ENCODE measurements at regions of chr14 and their contacts with region 1.

Region 1: GRCh38 chr14:95157327-95158189 is at the start of gene DICER1:
- DNase-seq: peak; percentile 99
- H3K4me3 Mint-ChIP-seq: peak within 1 kb of the TSS; percentile 91
- H3K27ac Mint-ChIP-seq: peak within 1 kb of the TSS; percentile 97
- H3K4me1 Mint-ChIP-seq: peaks cover 30% of the 10 kb centered on the region
- H3K27me3 Mint-ChIP-seq: no peaks in the 10 kb centered on the region
- total RNA-seq, gene DICER1: 74.4 and 77.0 TPM in 2 replicates

Region 2: DNA sequence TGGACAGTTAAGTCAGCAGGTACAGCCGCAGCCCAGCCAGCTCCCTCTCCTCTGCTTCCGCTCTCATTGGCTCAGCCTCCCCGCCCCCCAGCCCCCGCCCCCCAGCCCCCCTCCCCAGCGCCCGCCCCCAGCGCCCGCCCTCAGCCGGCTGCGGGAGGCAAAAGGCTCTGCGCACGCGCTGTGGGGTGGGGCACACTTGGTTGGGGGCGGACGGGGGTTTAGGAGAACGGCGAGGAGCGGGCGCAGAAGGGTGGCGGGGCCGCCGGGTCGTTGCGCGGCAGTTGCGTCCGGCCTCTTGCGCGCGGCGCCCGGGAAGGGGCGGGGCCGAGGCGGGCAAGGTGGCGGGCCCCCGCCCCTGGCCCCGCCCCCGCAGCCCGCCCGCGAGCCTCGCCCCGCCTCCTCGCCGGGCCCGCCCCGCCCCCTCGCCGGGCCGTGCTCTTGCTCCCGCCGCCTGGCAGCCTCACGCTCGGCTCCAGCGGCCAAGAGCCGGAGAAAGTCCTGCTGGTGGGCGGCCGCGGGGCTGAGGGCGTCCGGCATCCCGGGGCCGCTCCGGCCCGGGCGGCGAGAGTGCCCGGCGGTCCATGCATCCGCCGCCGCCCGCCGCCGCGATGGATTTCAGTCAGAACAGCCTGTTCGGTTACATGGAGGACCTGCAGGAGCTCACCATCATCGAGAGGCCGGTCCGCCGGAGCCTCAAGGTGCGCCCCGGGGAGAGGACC is 983.5 kb before region 1 on chr14 and contains the start of gene PPP4R4:
- intact Hi-C with region 1: loop called (anchors 5 kb)
- DNase-seq: peak; percentile 97
- H3K4me3 Mint-ChIP-seq: peak within 1 kb of the TSS; percentile 88
- H3K27ac Mint-ChIP-seq: peak within 1 kb of the TSS; percentile 70
- H3K4me1 Mint-ChIP-seq: peaks cover 17% of the 10 kb centered on the region
- H3K27me3 Mint-ChIP-seq: peaks cover 54% of the 10 kb centered on the region
- total RNA-seq, gene PPP4R4: 2.7 and 3.1 TPM in 2 replicates

Region 3: GRCh38 chr14:95173518-95173917 is 16.0 kb after region 1 on chr14:
- intact Hi-C with region 1: no loop called
- DNase-seq: no peak
- H3K4me3 Mint-ChIP-seq: no peak overlapping the region
- H3K27ac Mint-ChIP-seq: no peak overlapping the region
- H3K4me1 Mint-ChIP-seq: no peaks in the 10 kb centered on the region
- H3K27me3 Mint-ChIP-seq: peaks cover 13% of the 10 kb centered on the region

Region 4: DNA sequence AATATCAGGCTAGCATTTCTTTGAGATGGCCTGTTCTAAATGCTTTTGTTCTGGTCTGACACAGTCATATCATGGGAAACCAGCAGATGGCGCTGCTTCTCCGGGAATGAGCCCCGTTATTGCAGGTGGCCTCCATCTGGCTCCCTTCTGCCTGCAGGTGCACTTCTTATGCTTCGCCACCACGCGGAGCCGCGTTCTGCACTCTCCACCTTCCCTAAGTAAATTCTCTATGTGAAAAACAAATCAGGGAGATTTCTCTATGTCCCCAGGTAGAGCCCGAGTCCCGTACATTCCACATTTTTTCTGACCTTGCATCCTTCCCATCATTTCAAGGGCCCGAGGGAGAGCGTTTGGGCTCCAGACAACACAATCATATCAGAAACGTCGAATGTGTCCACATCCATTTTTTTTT is 403.4 kb after region 1 on chr14:
- intact Hi-C with region 1: no loop called
- DNase-seq: peak; percentile 97
- H3K4me3 Mint-ChIP-seq: no peak overlapping the region
- H3K27ac Mint-ChIP-seq: no peak overlapping the region
- H3K4me1 Mint-ChIP-seq: peaks cover 2% of the 10 kb centered on the region
- H3K27me3 Mint-ChIP-seq: peaks cover 4% of the 10 kb centered on the region